Heart right ventricle (tissue), 16 donors: ENCODE measurements at regions of chr14 and their contacts with region 1.

Region 1: GRCh38 chr14:96409701-96410100 is 17.8 kb downstream of the AK7 start:
- DNase-seq: no peak
- ATAC-seq: peak in 1 of 8 donors; percentile 35
- H3K4me3 ChIP-seq: no peak overlapping the region
- H3K27ac ChIP-seq: no peak overlapping the region
- H3K4me1 ChIP-seq: no peaks in the 10 kb centered on the region
- H3K27me3 ChIP-seq: peaks cover 0 to 7% (median 0%) of the 10 kb centered on the region in 7 donors
- CTCF ChIP-seq: no peak

Region 2: GRCh38 chr14:96117100-96117897 is 292.4 kb before region 1 on chr14:
- intact Hi-C with region 1: loop called in 1 of 10 experiments (anchors 10 kb)
- DNase-seq: no peak
- ATAC-seq: no peak
- H3K4me3 ChIP-seq: no peak overlapping the region
- H3K27ac ChIP-seq: no peak overlapping the region
- H3K4me1 ChIP-seq: no peaks in the 10 kb centered on the region
- H3K27me3 ChIP-seq: peaks cover 0 to 9% (median 0%) of the 10 kb centered on the region in 7 donors
- CTCF ChIP-seq: no peak

Region 3: DNA sequence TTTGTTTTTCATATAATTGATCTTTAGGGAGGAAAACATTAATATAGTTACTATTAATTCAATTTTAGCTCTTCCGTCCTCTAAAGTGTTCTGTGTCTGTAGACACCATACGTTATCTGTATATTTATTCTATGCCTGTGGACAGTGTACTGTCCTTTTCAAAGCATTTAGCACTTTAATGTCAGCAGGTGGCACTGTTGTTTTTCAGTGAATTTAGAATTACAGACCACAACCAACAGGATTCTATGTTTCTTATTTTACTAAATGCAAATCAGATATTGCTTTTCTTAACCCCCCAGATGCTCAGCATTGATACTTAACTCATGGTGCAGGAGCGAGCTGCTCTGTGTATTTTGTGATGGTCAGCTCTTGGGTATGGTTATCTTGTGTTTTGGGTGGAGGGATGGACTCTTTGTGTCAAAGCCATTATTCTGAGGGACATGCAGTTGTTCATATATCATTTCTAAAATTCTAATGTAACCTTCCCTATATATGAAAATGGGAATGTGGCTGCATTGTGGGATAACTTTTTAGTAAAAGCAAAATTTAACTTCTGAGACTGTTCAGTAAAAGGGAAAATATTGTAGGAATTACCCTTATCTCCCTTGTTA is 157.7 kb after region 1 on chr14:
- intact Hi-C with region 1: no loop called
- DNase-seq: no peak
- ATAC-seq: peak in 2 of 8 donors; percentile 42 to 47
- H3K4me3 ChIP-seq: no peak overlapping the region
- H3K27ac ChIP-seq: no peak overlapping the region
- H3K4me1 ChIP-seq: no peaks in the 10 kb centered on the region
- H3K27me3 ChIP-seq: no peaks in the 10 kb centered on the region
- CTCF ChIP-seq: peak; percentile 16 to 63 (median 53)